Natural killer cell (primary cell): ENCODE measurements at regions of chr10 and their contacts with region 1.

Region 1: GRCh38 chr10:119305860-119306513 is 98.6 kb downstream of the GRK5 start:
- DNase-seq: peak; percentile 81 to 91
- ATAC-seq: peak; percentile 69 to 87 (median 80)
- H3K4me3 ChIP-seq: peak overlapping the region; percentile 7
- H3K4me3 Mint-ChIP-seq: peak overlapping the region; percentile 60
- H3K27ac ChIP-seq: peak overlapping the region; percentile 92
- H3K27ac Mint-ChIP-seq: peak overlapping the region; percentile 92
- H3K4me1 ChIP-seq: peaks cover 99% of the 10 kb centered on the region
- H3K4me1 Mint-ChIP-seq: peaks cover 84 to 95% of the 10 kb centered on the region in 2 donors
- H3K27me3 ChIP-seq: peaks cover 10% of the 10 kb centered on the region
- H3K27me3 Mint-ChIP-seq: peaks cover 0 to under 1% of the 10 kb centered on the region in 2 donors
- CTCF ChIP-seq: no peak

Region 2: DNA sequence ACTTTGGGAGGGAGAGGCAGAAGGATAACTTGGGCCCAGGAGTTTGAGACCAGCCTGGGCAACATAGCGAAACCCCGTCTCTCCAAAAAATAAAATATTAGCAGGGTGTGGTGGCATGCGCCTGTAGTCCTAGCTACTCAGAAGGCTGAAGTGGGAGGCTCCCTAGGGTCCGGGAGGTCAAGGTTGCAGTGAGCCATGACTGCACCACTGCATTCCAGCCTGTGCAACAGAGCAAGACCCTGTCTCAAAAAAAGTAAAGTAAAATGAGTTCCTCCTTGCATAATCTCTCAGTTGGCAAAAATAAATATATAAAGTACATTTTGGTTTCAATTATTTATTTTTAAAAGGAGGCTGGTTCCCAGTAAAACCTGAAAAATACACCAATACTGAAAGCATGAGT is 264.7 kb before region 1 on chr10:
- intact Hi-C with region 1: no loop called
- DNase-seq: no peak
- ATAC-seq: no peak
- H3K4me3 ChIP-seq: no peak overlapping the region
- H3K4me3 Mint-ChIP-seq: no peak overlapping the region
- H3K27ac ChIP-seq: no peak overlapping the region
- H3K27ac Mint-ChIP-seq: no peak overlapping the region
- H3K4me1 ChIP-seq: no peaks in the 10 kb centered on the region
- H3K4me1 Mint-ChIP-seq: peaks cover 19 to 29% of the 10 kb centered on the region in 2 donors
- H3K27me3 ChIP-seq: no peaks in the 10 kb centered on the region
- H3K27me3 Mint-ChIP-seq: no peaks in the 10 kb centered on the region
- CTCF ChIP-seq: no peak

Region 3: GRCh38 chr10:119131512-119132240 is 174.3 kb before region 1 on chr10:
- intact Hi-C with region 1: loop called (anchors 5 kb)
- DNase-seq: peak in 1 of 2 donors; percentile 68
- ATAC-seq: peak; percentile 78 to 84 (median 83)
- H3K4me3 ChIP-seq: peak overlapping the region; percentile 39
- H3K4me3 Mint-ChIP-seq: peak overlapping the region; percentile 95
- H3K27ac ChIP-seq: peak overlapping the region; percentile 81
- H3K27ac Mint-ChIP-seq: peak overlapping the region; percentile 94 to 96
- H3K4me1 ChIP-seq: peaks cover 29% of the 10 kb centered on the region
- H3K4me1 Mint-ChIP-seq: peaks cover 30% of the 10 kb centered on the region in 2 donors
- H3K27me3 ChIP-seq: no peaks in the 10 kb centered on the region
- H3K27me3 Mint-ChIP-seq: no peaks in the 10 kb centered on the region
- CTCF ChIP-seq: no peak

Region 4: GRCh38 chr10:119270762-119271366 is 35.1 kb before region 1 on chr10:
- intact Hi-C with region 1: loop called (anchors 1 kb)
- DNase-seq: peak; percentile 75
- ATAC-seq: peak; percentile 41 to 74 (median 57)
- H3K4me3 ChIP-seq: peak overlapping the region; percentile 1
- H3K4me3 Mint-ChIP-seq: peak overlapping the region; percentile 90
- H3K27ac ChIP-seq: peak overlapping the region; percentile 100
- H3K27ac Mint-ChIP-seq: peak overlapping the region; percentile 94 to 99
- H3K4me1 ChIP-seq: peaks cover 81% of the 10 kb centered on the region
- H3K4me1 Mint-ChIP-seq: peaks cover 75% of the 10 kb centered on the region in 2 donors
- H3K27me3 ChIP-seq: no peaks in the 10 kb centered on the region
- H3K27me3 Mint-ChIP-seq: no peaks in the 10 kb centered on the region
- CTCF ChIP-seq: no peak

Region 5: GRCh38 chr10:119289227-119289920 is 16.6 kb before region 1 on chr10:
- intact Hi-C with region 1: loop called (anchors 2 kb)
- DNase-seq: no peak
- ATAC-seq: no peak
- H3K4me3 ChIP-seq: no peak overlapping the region
- H3K4me3 Mint-ChIP-seq: peak overlapping the region; percentile 17
- H3K27ac ChIP-seq: no peak overlapping the region
- H3K27ac Mint-ChIP-seq: peak overlapping the region; percentile 54 to 94
- H3K4me1 ChIP-seq: peaks cover 51% of the 10 kb centered on the region
- H3K4me1 Mint-ChIP-seq: peaks cover 64 to 78% of the 10 kb centered on the region in 2 donors
- H3K27me3 ChIP-seq: no peaks in the 10 kb centered on the region
- H3K27me3 Mint-ChIP-seq: peaks cover 0 to 4% of the 10 kb centered on the region in 2 donors
- CTCF ChIP-seq: no peak

Region 6: DNA sequence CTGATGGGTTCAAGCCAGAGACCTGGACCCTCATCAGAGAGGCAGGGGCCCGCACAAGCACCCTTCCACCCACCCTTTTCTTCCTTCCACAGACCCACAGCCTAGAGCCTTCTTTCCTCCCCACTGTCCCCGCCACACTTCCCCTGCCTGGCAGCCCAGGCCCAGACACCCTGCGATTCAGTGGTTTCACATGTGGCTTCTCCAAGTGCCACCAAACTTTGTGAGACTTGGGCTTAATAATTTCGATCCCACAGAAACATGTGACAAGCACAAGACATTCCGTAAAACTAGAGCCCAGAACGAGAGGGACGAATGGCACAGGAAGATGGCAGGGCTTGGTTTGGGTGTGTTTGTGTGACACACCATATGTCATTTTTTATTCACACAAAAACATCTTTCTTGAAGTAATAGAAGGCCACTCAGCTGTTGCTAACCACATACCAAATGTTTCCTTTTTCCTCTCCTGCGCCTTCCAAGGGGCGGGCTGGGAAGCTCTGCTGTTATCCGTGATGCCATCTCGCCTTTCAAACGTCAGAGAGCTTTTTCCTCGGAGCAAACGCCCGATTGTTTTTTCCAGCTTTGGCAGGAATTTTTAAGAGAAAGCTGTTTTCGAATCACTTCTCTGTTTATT is 64.2 kb after region 1 on chr10:
- intact Hi-C with region 1: loop called (anchors 5 kb)
- DNase-seq: peak; percentile 22 to 39
- ATAC-seq: peak; percentile 67 to 86 (median 78)
- H3K4me3 ChIP-seq: no peak overlapping the region
- H3K4me3 Mint-ChIP-seq: peak overlapping the region; percentile 71
- H3K27ac ChIP-seq: peak overlapping the region; percentile 4
- H3K27ac Mint-ChIP-seq: peak overlapping the region; percentile 64 to 79
- H3K4me1 ChIP-seq: peaks cover 23% of the 10 kb centered on the region
- H3K4me1 Mint-ChIP-seq: peaks cover 48 to 57% of the 10 kb centered on the region in 2 donors
- H3K27me3 ChIP-seq: no peaks in the 10 kb centered on the region
- H3K27me3 Mint-ChIP-seq: peaks cover 0 to 3% of the 10 kb centered on the region in 2 donors
- CTCF ChIP-seq: no peak

Region 7: GRCh38 chr10:119516381-119517234 is 210.6 kb after region 1 on chr10:
- intact Hi-C with region 1: no loop called
- DNase-seq: peak in 1 of 2 donors; percentile 84
- ATAC-seq: peak; percentile 63 to 66 (median 64)
- H3K4me3 ChIP-seq: no peak overlapping the region
- H3K4me3 Mint-ChIP-seq: peak overlapping the region; percentile 37
- H3K27ac ChIP-seq: peak overlapping the region; percentile 77
- H3K27ac Mint-ChIP-seq: peak overlapping the region; percentile 71 to 80
- H3K4me1 ChIP-seq: peaks cover 38% of the 10 kb centered on the region
- H3K4me1 Mint-ChIP-seq: peaks cover 17 to 35% of the 10 kb centered on the region in 2 donors
- H3K27me3 ChIP-seq: no peaks in the 10 kb centered on the region
- H3K27me3 Mint-ChIP-seq: no peaks in the 10 kb centered on the region
- CTCF ChIP-seq: no peak